ENCODE measurements at regions of chr12 and their contacts with region 1.

Region 1: GRCh38 chr12:53198486-53199110 is 8.5 kb downstream of the ITGB7 start:
- DNase-seq: no peak
- H3K4me3 ChIP-seq: no peak overlapping the region
- H3K27ac ChIP-seq: no peak overlapping the region
- H3K4me1 ChIP-seq: peaks cover 0 to 17% (median 13%) of the 10 kb centered on the region in 4 donors
- H3K27me3 ChIP-seq: no peaks in the 10 kb centered on the region
- CTCF ChIP-seq: no peak
- EP300 ChIP-seq: no peak
- POLR2A ChIP-seq: no peak

Region 2: DNA sequence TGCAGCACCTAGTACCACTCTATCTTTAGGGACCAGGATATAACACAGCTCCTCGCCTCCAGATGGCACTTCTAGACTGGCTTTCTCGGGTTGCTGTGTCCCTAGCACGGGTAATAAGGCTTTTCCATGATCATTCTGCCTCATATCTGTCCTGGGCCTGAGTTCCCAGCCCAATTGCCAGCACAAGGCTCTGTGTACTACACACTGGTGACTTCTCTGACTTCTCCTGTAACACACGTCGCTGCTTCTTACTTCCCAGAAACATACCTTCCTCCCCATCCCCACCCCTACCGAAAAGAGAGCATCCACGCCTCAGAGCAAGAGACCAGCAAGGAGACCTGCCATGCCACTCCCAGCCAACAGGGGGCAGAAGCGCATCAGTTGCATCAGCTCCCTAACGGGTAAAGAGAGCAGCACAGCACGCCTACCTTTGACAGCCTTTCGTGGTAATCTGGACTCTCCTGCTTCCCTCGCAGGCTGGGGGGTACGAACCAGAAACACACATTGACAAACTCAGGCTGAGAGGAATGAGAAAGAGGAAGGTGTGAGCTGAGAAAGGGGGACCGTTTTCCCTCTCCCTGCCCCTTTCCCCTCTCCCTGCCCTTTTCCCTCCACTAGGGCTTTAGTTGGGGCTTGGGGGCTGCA is 39.3 kb before region 1 on chr12:
- intact Hi-C with region 1: loop called (anchors 5 kb)
- DNase-seq: peak; percentile 89 to 92
- H3K4me3 ChIP-seq: no peak overlapping the region
- H3K27ac ChIP-seq: peak overlapping the region in 1 of 5 donors; percentile 11
- H3K4me1 ChIP-seq: peaks cover 0 to 11% (median 7%) of the 10 kb centered on the region in 4 donors
- H3K27me3 ChIP-seq: no peaks in the 10 kb centered on the region
- CTCF ChIP-seq: peak in 5 of 7 experiments; percentile 94 to 99 (median 97)
- EP300 ChIP-seq: no peak
- POLR2A ChIP-seq: no peak

Measured in stomach (tissue), 19 donors.